ENCODE measurements at regions of chr1 and their contacts with region 1.

Region 1: DNA sequence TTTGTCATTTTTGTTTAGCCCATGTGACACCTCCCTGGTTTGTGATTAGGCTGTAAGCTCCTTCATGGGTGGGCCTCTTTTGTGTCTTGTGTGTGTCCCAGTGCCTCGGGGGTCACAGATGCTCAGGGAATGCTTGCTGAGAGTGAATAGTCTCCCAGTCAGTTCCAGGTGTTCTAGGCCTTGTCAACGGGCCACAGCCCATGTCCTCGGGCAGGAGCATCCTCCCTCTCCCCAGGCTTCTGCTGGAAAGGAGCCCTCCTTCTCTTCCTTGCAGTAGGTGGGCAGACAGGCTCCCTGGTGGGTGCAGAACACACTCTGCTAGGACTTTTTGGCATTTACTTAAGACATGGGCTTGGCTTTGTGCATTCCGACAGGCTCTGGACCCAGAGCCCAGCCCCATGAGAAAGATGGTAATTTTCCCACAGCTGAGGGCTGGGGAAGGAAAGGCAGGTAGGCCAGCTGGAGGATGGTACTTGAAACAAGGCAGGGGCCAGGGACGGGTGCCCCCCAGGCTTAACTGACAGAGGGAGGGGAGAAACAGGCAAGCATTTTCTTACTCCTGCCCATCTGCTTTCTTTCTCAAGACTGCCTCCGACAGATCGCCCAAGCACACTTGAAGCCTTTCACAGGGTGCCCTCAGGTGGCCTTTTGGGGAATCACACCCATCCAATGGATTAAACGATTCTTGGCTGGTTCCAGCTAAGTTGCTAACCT is 7.1 kb upstream of the CPLANE2 start:
- DNase-seq: peak; percentile 64 to 86 (median 74)
- ATAC-seq: peak; percentile 98
- H3K4me3 ChIP-seq: no peak overlapping the region
- H3K4me3 Mint-ChIP-seq: no peak overlapping the region
- H3K27ac ChIP-seq: no peak overlapping the region
- H3K27ac Mint-ChIP-seq: no peak overlapping the region
- H3K4me1 ChIP-seq: peaks cover 7% of the 10 kb centered on the region
- H3K4me1 Mint-ChIP-seq: peaks cover 12% of the 10 kb centered on the region
- H3K27me3 ChIP-seq: no peaks in the 10 kb centered on the region
- H3K27me3 Mint-ChIP-seq: no peaks in the 10 kb centered on the region
- CTCF ChIP-seq: peak; percentile 78

Region 2: GRCh38 chr1:16009030-16009709 is 234.9 kb before region 1 on chr1:
- CTCF ChIA-PET with region 1: no interaction called
- POLR2A ChIA-PET with region 1: no interaction called
- intact Hi-C with region 1: loop called (anchors 1 to 2 kb)
- DNase-seq: peak; percentile 58 to 81 (median 64)
- ATAC-seq: peak; percentile 65
- H3K4me3 ChIP-seq: no peak overlapping the region
- H3K4me3 Mint-ChIP-seq: no peak overlapping the region
- H3K27ac ChIP-seq: no peak overlapping the region
- H3K27ac Mint-ChIP-seq: no peak overlapping the region
- H3K4me1 ChIP-seq: peaks cover 14% of the 10 kb centered on the region
- H3K4me1 Mint-ChIP-seq: no peaks in the 10 kb centered on the region
- H3K27me3 ChIP-seq: peaks cover 0 to 5% of the 10 kb centered on the region in 2 experiments
- H3K27me3 Mint-ChIP-seq: peaks cover 14% of the 10 kb centered on the region
- CTCF ChIP-seq: peak; percentile 99

Region 3: GRCh38 chr1:16078925-16079656 is 165.0 kb before region 1 on chr1:
- CTCF ChIA-PET with region 1: interaction called, 16 read pairs
- POLR2A ChIA-PET with region 1: interaction called, 5 read pairs
- intact Hi-C with region 1: loop called (anchors 1 kb)
- DNase-seq: peak; percentile 42 to 87 (median 70)
- ATAC-seq: peak; percentile 75
- H3K4me3 ChIP-seq: peak overlapping the region; percentile 38
- H3K4me3 Mint-ChIP-seq: peak overlapping the region; percentile 87
- H3K27ac ChIP-seq: no peak overlapping the region
- H3K27ac Mint-ChIP-seq: no peak overlapping the region
- H3K4me1 ChIP-seq: peaks cover 13% of the 10 kb centered on the region
- H3K4me1 Mint-ChIP-seq: peaks cover 5% of the 10 kb centered on the region
- H3K27me3 ChIP-seq: peaks cover under 1 to 1% of the 10 kb centered on the region in 2 experiments
- H3K27me3 Mint-ChIP-seq: peaks cover 14% of the 10 kb centered on the region
- CTCF ChIP-seq: peak; percentile 75

Region 4: GRCh38 chr1:16187748-16188401 is 56.2 kb before region 1 on chr1:
- CTCF ChIA-PET with region 1: no interaction called
- POLR2A ChIA-PET with region 1: no interaction called
- intact Hi-C with region 1: loop called (anchors 1 kb)
- DNase-seq: peak; percentile 57 to 88 (median 75)
- ATAC-seq: peak; percentile 91
- H3K4me3 ChIP-seq: no peak overlapping the region
- H3K4me3 Mint-ChIP-seq: no peak overlapping the region
- H3K27ac ChIP-seq: no peak overlapping the region
- H3K27ac Mint-ChIP-seq: no peak overlapping the region
- H3K4me1 ChIP-seq: peaks cover 7% of the 10 kb centered on the region
- H3K4me1 Mint-ChIP-seq: no peaks in the 10 kb centered on the region
- H3K27me3 ChIP-seq: peaks cover 0 to 4% of the 10 kb centered on the region in 2 experiments
- H3K27me3 Mint-ChIP-seq: peaks cover 10% of the 10 kb centered on the region
- CTCF ChIP-seq: peak; percentile 97

Region 5: GRCh38 chr1:16206547-16207317 is 37.4 kb before region 1 on chr1:
- CTCF ChIA-PET with region 1: interaction called, 7 read pairs
- POLR2A ChIA-PET with region 1: no interaction called
- intact Hi-C with region 1: loop called (anchors 2 kb)
- DNase-seq: peak; percentile 85 to 98 (median 91)
- ATAC-seq: peak; percentile 88
- H3K4me3 ChIP-seq: peak overlapping the region; percentile 75
- H3K4me3 Mint-ChIP-seq: peak overlapping the region; percentile 93
- H3K27ac ChIP-seq: peak overlapping the region; percentile 60 to 86
- H3K27ac Mint-ChIP-seq: peak overlapping the region; percentile 95
- H3K4me1 ChIP-seq: peaks cover 25% of the 10 kb centered on the region
- H3K4me1 Mint-ChIP-seq: peaks cover 12% of the 10 kb centered on the region
- H3K27me3 ChIP-seq: no peaks in the 10 kb centered on the region
- H3K27me3 Mint-ChIP-seq: no peaks in the 10 kb centered on the region
- CTCF ChIP-seq: no peak

Region 6: GRCh38 chr1:16342331-16343062 is 98.4 kb after region 1 on chr1:
- CTCF ChIA-PET with region 1: no interaction called
- POLR2A ChIA-PET with region 1: no interaction called
- intact Hi-C with region 1: no loop called
- DNase-seq: no peak
- ATAC-seq: no peak
- H3K4me3 ChIP-seq: no peak overlapping the region
- H3K4me3 Mint-ChIP-seq: no peak overlapping the region
- H3K27ac ChIP-seq: no peak overlapping the region
- H3K27ac Mint-ChIP-seq: no peak overlapping the region
- H3K4me1 ChIP-seq: peaks cover 10% of the 10 kb centered on the region
- H3K4me1 Mint-ChIP-seq: peaks cover 21% of the 10 kb centered on the region
- H3K27me3 ChIP-seq: no peaks in the 10 kb centered on the region
- H3K27me3 Mint-ChIP-seq: no peaks in the 10 kb centered on the region
- CTCF ChIP-seq: no peak

Measured in CD4-positive, alpha-beta T cell (primary cell).